ENCODE measurements at regions of chr16 and their contacts with region 1.

Region 1: DNA sequence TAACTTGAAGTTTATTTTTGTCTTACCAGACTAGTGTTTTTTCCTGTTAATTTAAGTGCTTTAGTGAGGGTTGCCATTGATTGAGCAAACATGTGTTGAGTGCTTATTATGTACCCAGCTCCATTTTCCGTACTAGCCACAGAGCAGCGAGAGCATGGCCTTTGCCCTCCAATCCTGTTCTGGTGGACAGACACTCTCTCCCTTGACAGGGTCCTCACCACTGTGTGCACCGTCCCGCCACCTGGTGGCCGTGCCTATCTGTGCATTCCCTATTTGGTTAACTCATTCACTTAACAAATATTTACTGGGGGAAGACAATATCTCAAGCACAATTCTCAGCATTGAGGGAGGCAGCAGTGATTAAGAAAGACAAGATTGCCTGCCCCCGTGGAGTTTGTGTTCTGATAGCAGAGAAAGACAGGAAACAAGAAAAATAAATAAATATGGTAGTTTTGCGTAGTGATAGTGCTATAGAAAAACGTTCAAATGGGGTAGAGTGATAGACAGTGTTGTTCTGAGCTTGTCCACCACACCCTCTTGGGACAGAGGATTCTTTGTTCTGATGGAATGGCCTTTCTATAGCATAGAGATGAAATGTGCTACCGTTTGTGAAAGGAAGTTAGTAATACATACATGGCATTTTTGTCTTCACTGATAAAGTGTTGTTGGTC is 13.0 kb downstream of the CDH13 start:
- DNase-seq: peak; percentile 66
- ATAC-seq: peak; percentile 56
- H3K4me3 Mint-ChIP-seq: no peak overlapping the region
- H3K27ac Mint-ChIP-seq: no peak overlapping the region
- H3K4me1 Mint-ChIP-seq: peaks cover 38% of the 10 kb centered on the region
- H3K27me3 Mint-ChIP-seq: no peaks in the 10 kb centered on the region

Region 2: DNA sequence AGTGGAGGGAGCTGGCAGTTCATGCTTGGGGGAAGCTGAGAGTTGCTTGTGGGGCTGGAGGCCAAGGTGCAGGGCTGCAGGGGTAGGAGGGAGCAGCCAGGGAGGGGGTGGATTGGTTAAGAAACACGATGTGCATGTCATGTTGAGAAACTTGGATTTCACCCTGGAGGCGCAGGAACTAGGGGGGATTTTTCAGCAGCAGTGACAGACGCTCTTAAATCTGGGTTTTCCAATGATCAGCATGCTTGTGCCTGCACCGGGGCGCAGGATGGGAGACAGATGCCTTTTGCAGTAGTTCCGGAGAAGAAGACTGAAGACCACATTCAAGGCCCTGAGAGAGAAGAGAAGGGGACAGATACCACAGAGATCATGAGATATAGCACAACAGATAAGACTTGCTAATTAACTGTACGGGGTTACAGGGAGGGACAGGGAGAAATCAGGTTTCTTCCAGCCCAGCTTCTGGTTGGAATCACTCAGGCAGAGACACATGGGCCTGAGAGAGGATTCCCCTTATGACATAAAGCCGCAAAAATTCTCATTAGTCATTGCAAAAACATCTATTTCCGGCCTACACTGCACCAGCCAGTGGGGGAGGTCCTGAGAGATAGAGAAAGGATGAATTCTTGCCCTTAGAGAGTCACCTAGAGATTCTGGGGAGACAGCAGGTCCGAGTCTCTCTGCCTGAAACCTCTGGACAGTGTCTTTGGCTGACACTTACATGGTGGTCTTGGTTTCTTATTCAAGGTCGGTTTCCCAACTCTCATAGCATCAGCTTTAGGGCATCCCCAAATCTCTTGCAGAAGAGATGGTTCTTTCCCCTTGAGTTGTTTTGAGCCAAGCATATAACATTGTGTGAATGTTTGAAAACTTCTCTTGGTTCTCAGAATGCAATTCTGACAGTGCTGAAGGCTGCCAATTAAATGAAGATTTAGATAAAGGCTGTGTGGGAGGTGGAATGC is 14.0 kb after region 1 on chr16:
- CTCF ChIA-PET with region 1: interaction called, 16 read pairs
- DNase-seq: peak; percentile 73
- ATAC-seq: peak; percentile 73
- H3K4me3 Mint-ChIP-seq: peak overlapping the region; percentile 42
- H3K27ac Mint-ChIP-seq: peak overlapping the region; percentile 98
- H3K4me1 Mint-ChIP-seq: peaks cover 82% of the 10 kb centered on the region
- H3K27me3 Mint-ChIP-seq: no peaks in the 10 kb centered on the region